Keratinocyte (primary cell): ENCODE measurements at regions of chr12 and their contacts with region 1.

Region 1: DNA sequence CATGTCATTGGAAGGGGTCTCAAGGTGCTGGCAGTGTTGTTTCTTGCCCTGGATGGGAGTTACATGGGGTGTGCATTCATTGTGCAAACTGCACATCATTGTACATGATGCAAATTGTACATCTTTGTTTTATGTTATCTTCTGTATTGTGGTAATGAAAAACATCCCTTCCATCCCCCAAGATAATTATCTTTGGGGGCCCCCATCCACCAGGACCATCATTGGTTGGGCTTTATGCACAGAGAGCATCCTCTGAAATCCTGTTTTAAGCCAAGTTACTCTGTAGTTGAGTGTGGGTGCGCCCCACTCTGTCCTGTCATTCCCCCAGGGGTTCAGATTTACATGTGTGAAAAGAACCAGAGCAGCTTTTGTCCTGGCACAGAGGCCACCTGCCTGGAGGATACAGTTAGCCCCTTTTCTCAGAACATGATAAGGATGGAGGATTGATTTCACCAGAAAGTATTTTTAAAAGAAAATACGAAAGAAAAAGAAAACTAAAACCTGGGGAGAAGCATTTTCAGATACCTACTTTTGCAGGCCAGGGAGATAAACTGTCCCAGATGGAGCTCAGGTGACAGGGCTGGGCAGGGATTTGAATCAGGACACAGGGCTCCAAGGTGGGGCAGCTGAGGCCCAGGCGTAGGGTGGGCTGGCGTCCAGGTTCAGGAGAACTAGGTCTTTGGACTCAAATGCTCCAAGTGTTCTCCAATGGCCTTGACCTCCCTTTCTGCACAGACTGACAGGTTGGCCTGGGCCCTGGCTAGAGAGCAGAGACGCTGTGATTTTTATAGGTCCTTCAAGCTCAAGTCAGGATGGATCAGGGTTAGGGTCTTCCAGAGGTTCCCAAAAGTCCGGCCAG is 17.2 kb downstream of the WSCD2 start:
- DNase-seq: no peak
- H3K4me3 ChIP-seq: no peak overlapping the region
- H3K27ac ChIP-seq: no peak overlapping the region
- H3K4me1 ChIP-seq: no peaks in the 10 kb centered on the region
- H3K27me3 ChIP-seq: no peaks in the 10 kb centered on the region
- CTCF ChIP-seq: no peak

Region 2: GRCh38 chr12:108080363-108080762 is 65.9 kb before region 1 on chr12:
- dilution Hi-C with region 1: loop called (anchors 10 kb)
- DNase-seq: no peak
- H3K4me3 ChIP-seq: no peak overlapping the region
- H3K27ac ChIP-seq: no peak overlapping the region
- H3K4me1 ChIP-seq: no peaks in the 10 kb centered on the region
- H3K27me3 ChIP-seq: no peaks in the 10 kb centered on the region
- CTCF ChIP-seq: no peak

Region 3: GRCh38 chr12:108214486-108214885 is 68.2 kb after region 1 on chr12:
- dilution Hi-C with region 1: loop called (anchors 5 kb)
- DNase-seq: no peak
- H3K4me3 ChIP-seq: no peak overlapping the region
- H3K27ac ChIP-seq: no peak overlapping the region
- H3K4me1 ChIP-seq: no peaks in the 10 kb centered on the region
- H3K27me3 ChIP-seq: no peaks in the 10 kb centered on the region
- CTCF ChIP-seq: no peak

Region 4: GRCh38 chr12:108234158-108234557 is 87.9 kb after region 1 on chr12:
- dilution Hi-C with region 1: no loop called
- DNase-seq: no peak
- H3K4me3 ChIP-seq: no peak overlapping the region
- H3K27ac ChIP-seq: no peak overlapping the region
- H3K4me1 ChIP-seq: no peaks in the 10 kb centered on the region
- H3K27me3 ChIP-seq: peaks cover 5% of the 10 kb centered on the region
- CTCF ChIP-seq: peak in 2 of 3 experiments; percentile 7 to 22